ENCODE measurements at regions of chr9 and their contacts with region 1.

Region 1: GRCh38 chr9:126490871-126491567 is 122.7 kb upstream of the LMX1B start:
- DNase-seq: no peak
- H3K4me3 ChIP-seq: no peak overlapping the region
- H3K27ac ChIP-seq: no peak overlapping the region
- H3K4me1 ChIP-seq: no peaks in the 10 kb centered on the region
- H3K27me3 ChIP-seq: no peaks in the 10 kb centered on the region
- CTCF ChIP-seq: peak; percentile 91 to 94

Region 2: GRCh38 chr9:126386088-126386487 is 104.9 kb before region 1 on chr9:
- intact Hi-C with region 1: no loop called
- DNase-seq: no peak
- H3K4me3 ChIP-seq: no peak overlapping the region
- H3K27ac ChIP-seq: no peak overlapping the region
- H3K4me1 ChIP-seq: no peaks in the 10 kb centered on the region
- H3K27me3 ChIP-seq: no peaks in the 10 kb centered on the region
- CTCF ChIP-seq: no peak

Region 3: GRCh38 chr9:126449725-126450667 is 41.0 kb before region 1 on chr9:
- intact Hi-C with region 1: loop called (anchors 5 kb)
- DNase-seq: no peak
- H3K4me3 ChIP-seq: no peak overlapping the region
- H3K27ac ChIP-seq: no peak overlapping the region
- H3K4me1 ChIP-seq: no peaks in the 10 kb centered on the region
- H3K27me3 ChIP-seq: no peaks in the 10 kb centered on the region
- CTCF ChIP-seq: no peak